ENCODE measurements at regions of chr22 and their contacts with region 1.

Region 1: DNA sequence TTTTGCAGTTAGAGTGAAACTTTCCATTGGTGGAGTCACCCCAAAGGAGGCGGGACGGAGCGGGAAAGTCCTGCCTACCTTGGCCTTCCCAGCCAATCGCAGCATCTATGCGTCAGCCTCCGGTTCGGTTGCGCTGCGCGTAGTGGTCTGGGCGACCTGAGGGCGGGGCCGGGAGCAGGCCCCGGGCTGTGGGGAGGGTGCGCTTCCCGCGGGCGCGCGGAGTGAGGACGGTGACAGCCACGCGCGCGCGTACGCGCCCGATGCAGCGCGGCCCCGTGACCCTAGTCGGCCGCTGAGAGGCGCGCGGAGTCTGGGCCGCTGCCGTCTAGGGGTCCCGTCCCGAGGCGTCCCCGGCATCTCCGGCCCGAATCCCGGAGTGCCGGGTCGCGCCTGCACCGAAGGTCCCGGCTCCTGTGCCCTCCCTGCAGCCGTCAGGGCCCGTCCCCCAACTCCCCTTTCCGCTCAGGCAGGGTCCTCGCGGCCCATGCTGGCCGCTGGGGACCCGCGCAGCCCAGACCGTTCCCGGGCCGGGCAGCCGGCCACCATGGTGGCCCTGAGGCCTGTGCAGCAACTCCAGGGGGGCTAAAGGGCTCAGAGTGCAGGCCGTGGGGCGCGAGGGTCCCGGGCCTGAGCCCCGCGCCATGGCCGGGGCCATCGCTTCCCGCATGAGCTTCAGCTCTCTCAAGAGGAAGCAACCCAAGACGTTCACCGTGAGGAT is at the start of gene NF2:
- DNase-seq: peak; percentile 97 to 99 (median 99)
- H3K4me3 ChIP-seq: peak within 1 kb of the TSS; percentile 98
- H3K4me3 Mint-ChIP-seq: peak within 1 kb of the TSS; percentile 94 to 98 (median 96)
- H3K27ac ChIP-seq: peak within 1 kb of the TSS; percentile 93
- H3K27ac Mint-ChIP-seq: peak within 1 kb of the TSS; percentile 85 to 98 (median 97)
- H3K4me1 ChIP-seq: peaks cover 23% of the 10 kb centered on the region
- H3K4me1 Mint-ChIP-seq: peaks cover 20 to 38% (median 35%) of the 10 kb centered on the region in 3 donors
- H3K27me3 ChIP-seq: no peaks in the 10 kb centered on the region
- H3K27me3 Mint-ChIP-seq: no peaks in the 10 kb centered on the region
- total RNA-seq, gene NF2: 51.6 to 53.3 TPM

Region 2: DNA sequence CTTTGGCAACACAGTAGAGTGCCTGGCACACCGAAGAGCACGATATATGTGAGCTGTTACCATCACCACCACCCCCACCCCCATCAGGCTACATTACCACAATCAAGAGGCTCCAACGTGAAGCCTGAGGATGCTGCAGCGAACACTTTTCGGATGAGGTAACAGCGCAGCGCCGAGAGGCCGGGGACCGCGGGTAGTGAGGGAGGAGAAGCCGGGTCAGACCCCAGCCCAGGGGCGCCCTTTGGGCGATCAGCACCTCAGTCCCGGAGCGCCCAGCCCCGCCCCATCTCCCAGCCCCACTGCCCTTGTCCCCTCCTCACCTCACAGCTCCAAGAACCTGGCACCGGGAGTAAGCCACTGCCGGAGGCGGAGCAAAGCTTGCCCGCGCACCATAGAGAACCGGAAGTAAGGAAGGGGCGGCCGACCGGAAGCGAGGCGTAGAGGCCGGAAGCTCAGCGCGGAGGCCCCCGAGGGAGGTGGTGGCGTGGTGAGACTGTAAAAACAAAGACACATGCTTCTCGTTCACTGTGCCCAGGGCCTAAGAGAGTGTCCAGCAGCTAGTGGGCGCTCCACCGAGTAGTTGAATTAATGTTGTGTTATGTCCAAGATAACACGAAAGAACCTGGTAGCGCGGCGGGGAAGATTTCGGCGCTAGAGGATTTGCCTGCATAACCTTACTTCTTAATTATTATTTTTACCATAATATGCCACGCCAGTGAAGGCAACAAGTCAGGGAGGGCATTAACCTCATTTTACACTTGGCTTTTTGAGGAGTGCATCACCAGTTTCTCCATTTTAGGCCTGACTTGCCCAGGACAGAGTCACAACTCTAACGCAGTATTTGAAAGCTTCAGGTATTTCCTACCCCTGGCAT is 49.9 kb before region 1 on chr22 and contains the start of gene THOC5:
- CTCF ChIA-PET with region 1: no interaction called
- POLR2A ChIA-PET with region 1: interaction called, 11 read pairs
- DNase-seq: peak; percentile 80 to 92 (median 83)
- H3K4me3 ChIP-seq: peak within 1 kb of the TSS; percentile 93
- H3K4me3 Mint-ChIP-seq: peak within 1 kb of the TSS; percentile 87 to 98 (median 92)
- H3K27ac ChIP-seq: peak within 1 kb of the TSS; percentile 82
- H3K27ac Mint-ChIP-seq: peak within 1 kb of the TSS; percentile 70 to 97 (median 94)
- H3K4me1 ChIP-seq: peaks cover 6% of the 10 kb centered on the region
- H3K4me1 Mint-ChIP-seq: peaks cover 18 to 43% (median 32%) of the 10 kb centered on the region in 3 donors
- H3K27me3 ChIP-seq: no peaks in the 10 kb centered on the region
- H3K27me3 Mint-ChIP-seq: no peaks in the 10 kb centered on the region
- total RNA-seq, gene THOC5: 62.6 to 64.1 TPM

Region 3: DNA sequence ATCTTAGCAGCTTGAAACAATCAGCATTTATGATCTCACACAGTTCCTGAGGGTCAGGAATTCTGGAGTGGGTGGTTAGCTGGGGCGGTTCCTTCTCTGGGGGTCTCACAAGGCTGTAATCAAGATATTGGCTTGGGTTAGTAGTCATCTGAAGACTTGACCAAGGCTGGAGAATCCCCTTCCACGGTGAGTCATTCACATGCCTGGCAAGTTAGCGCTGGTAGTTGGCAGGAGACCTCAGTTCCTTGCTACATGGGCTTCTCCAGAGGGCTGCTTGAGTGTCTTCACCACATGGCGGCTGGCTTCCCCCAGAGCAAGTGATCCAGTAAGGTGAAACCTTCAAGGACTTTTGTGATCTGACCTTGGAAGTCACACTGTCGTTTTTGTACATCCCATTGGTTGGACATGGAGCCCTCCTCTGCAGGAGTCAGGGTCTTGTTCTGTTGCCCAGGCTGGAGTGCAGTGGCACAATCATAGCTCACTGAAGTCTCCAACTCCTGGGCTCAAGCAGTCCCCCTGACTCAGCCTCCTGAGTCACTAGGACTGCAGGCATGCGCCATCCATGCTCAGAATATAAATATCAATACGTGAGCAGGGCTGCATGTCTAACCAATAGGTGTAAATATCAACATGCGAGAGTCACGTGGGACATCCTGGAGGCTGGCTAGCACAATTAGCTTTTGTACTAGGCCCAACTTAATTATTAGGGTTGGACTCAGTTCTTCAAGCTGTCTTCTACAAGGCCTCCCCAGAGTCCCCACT is 15.4 kb before region 1 on chr22:
- CTCF ChIA-PET with region 1: interaction called, 10 read pairs
- POLR2A ChIA-PET with region 1: no interaction called
- DNase-seq: no peak
- H3K4me3 ChIP-seq: no peak overlapping the region
- H3K4me3 Mint-ChIP-seq: no peak overlapping the region
- H3K27ac ChIP-seq: no peak overlapping the region
- H3K27ac Mint-ChIP-seq: peak overlapping the region in 1 of 8 donors; percentile 36
- H3K4me1 ChIP-seq: peaks cover 7% of the 10 kb centered on the region
- H3K4me1 Mint-ChIP-seq: peaks cover 4 to 10% (median 10%) of the 10 kb centered on the region in 3 donors
- H3K27me3 ChIP-seq: no peaks in the 10 kb centered on the region
- H3K27me3 Mint-ChIP-seq: no peaks in the 10 kb centered on the region

Region 4: DNA sequence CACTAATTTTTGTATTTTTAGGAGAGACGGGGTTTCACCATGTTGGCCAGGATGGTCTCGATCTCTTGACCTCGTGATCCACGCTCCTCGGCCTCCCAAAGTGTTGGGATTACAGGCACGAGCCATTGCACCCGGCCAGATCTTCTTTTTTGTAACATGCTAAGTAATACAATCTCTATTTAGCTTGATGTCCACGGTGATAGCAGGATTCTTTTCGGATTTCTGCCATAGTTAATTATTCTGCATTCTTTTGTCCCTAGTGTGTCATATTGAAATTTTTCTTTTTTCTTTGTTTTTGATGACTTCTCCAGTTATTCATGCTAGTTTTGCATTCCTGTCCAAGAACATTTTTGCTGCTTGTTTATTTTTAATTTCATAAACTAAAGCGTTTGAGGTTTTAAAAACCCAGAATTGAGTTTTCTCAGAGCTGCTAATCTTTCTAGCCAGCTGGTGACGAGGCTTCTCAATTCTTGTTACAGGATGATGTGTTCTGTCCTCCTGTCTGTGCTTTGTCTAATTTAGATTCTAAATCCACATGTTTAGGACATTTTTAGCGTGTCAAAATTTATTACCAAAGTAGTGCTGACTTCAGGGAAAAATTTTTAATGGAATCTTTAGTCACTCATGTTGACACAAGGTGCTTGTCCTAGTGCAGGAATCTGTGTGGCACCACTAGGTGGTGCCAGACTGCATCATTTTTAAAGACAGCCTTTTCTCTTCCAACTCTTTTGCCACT is 21.7 kb after region 1 on chr22:
- CTCF ChIA-PET with region 1: interaction called, 12 read pairs
- POLR2A ChIA-PET with region 1: no interaction called
- DNase-seq: peak in 3 of 5 donors; percentile 6 to 34 (median 12)
- H3K4me3 ChIP-seq: no peak overlapping the region
- H3K4me3 Mint-ChIP-seq: no peak overlapping the region
- H3K27ac ChIP-seq: no peak overlapping the region
- H3K27ac Mint-ChIP-seq: peak overlapping the region in 4 of 8 donors; percentile 21 to 77 (median 43)
- H3K4me1 ChIP-seq: peaks cover 37% of the 10 kb centered on the region
- H3K4me1 Mint-ChIP-seq: peaks cover 48 to 78% (median 76%) of the 10 kb centered on the region in 3 donors
- H3K27me3 ChIP-seq: no peaks in the 10 kb centered on the region
- H3K27me3 Mint-ChIP-seq: no peaks in the 10 kb centered on the region

Region 5: DNA sequence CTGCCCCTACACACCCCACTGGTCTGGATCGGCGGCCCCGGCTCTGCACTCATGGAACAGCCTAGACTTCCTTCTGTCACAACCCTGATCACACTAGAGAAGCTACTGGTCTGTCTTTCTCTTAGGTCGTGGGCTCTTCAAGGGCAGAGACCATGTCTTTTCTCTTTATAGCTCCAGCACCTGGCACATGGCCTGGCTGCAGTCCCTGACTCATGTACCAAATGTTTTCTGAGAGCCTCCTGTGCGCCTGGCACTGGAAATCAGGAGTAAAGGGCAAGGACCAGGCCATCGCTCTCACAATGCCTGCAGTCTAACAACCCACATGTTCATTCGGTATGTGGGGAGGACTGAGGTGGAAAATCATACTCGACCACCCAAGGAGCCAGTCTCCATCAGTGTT is 227.1 kb after region 1 on chr22:
- CTCF ChIA-PET with region 1: no interaction called
- POLR2A ChIA-PET with region 1: no interaction called
- DNase-seq: no peak
- H3K4me3 ChIP-seq: no peak overlapping the region
- H3K4me3 Mint-ChIP-seq: no peak overlapping the region
- H3K27ac ChIP-seq: no peak overlapping the region
- H3K27ac Mint-ChIP-seq: peak overlapping the region in 1 of 8 donors; percentile 23
- H3K4me1 ChIP-seq: no peaks in the 10 kb centered on the region
- H3K4me1 Mint-ChIP-seq: peaks cover 17 to 47% (median 36%) of the 10 kb centered on the region in 3 donors
- H3K27me3 ChIP-seq: no peaks in the 10 kb centered on the region
- H3K27me3 Mint-ChIP-seq: no peaks in the 10 kb centered on the region

Measured in CD8-positive, alpha-beta memory T cell (primary cell).